ENCODE measurements at regions of chr13 and their contacts with region 1.

Region 1: DNA sequence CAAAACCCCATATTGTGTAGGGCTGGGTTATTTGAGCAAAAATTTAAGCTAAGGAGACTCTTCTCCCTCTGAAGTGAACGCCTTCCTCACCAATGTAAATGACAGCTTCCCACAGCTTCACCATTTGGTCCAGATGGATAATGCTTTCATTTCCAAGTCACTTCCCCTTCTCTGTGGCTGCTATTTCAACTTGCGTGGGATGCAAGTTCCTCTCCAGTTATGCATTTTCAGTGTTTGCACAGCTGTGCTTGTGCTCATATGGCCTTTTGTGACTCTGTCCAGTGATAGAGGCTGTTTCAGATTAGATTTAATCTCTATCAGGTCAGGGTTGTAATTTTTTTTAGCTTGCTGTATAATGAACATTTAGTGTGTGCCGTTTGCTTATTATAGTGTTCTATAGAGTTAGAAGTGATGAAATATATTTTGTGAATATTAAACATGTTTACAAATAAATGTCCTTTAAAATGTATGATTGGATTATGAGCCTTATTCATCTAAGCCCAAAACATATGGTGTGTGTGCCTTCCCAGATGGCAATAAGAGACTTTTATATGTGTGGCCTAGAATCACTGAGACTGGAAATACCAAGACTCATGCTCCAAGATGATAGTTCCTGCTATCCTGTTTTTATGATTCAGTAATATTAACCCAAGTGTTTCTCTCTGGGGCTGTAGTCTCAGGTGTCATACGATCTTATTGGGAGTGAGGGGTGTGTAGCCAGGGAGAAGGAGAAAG is 86.6 kb downstream of the TNFRSF19 start:
- DNase-seq: peak in 4 of 5 donors; percentile 43 to 69 (median 56)
- ATAC-seq: peak; percentile 65 to 85 (median 72)
- H3K4me3 ChIP-seq: no peak overlapping the region
- H3K27ac ChIP-seq: peak overlapping the region in 11 of 12 donors; percentile 2 to 74 (median 56)
- H3K4me1 ChIP-seq: peaks cover 0 to 72% (median 46%) of the 10 kb centered on the region in 12 donors
- H3K27me3 ChIP-seq: no peaks in the 10 kb centered on the region
- CTCF ChIP-seq: no peak
- POLR2A ChIP-seq: no peak

Region 2: GRCh38 chr13:23695711-23696464 is 39.1 kb after region 1 on chr13:
- intact Hi-C with region 1: loop called in 1 of 10 experiments (anchors 5 kb)
- DNase-seq: peak in 4 of 5 donors; percentile 35 to 75 (median 66)
- ATAC-seq: peak; percentile 22 to 80 (median 75)
- H3K4me3 ChIP-seq: peak overlapping the region in 8 of 12 donors; percentile 3 to 38 (median 26)
- H3K27ac ChIP-seq: peak overlapping the region in 7 of 12 donors; percentile 17 to 74 (median 45)
- H3K4me1 ChIP-seq: peaks cover 0 to 28% (median 9%) of the 10 kb centered on the region in 12 donors
- H3K27me3 ChIP-seq: no peaks in the 10 kb centered on the region
- CTCF ChIP-seq: peak in 1 of 12 donors; percentile 10
- POLR2A ChIP-seq: no peak

Measured in heart left ventricle (tissue), 16 donors.